HepG2 (cell line): ENCODE measurements at regions of chrX and their contacts with region 1.

Region 1: GRCh38 chrX:5928224-5928623 is 300.4 kb downstream of the NLGN4X start:
- DNase-seq: no peak
- ATAC-seq: no peak
- H3K4me3 ChIP-seq: no peak overlapping the region
- H3K27ac ChIP-seq: no peak overlapping the region
- H3K4me1 ChIP-seq: no peaks in the 10 kb centered on the region
- H3K27me3 ChIP-seq: no peaks in the 10 kb centered on the region
- CTCF ChIP-seq: no peak
- EP300 ChIP-seq: no peak
- POLR2A ChIP-seq: no peak
- RAD21 ChIP-seq: no peak

Region 2: DNA sequence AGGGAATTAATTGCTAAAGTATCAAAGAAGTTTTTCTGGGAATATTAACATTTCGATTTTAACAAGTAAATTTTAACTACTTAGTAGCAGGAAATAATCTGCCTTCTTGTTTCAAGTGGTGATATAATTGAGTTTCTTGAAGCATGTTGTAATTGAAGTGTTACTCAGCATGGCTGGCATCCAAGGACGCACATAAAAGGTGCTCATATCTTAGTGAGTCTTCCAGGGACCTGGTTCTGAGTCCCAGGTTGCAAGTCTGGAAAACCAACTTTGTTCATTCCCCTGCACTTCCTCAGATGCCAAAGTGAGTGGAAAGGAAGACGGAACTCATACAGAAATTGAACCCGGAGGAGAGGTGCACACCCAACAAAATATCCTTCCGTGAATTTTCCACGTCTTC is 99.2 kb before region 1 on chrX:
- CTCF ChIA-PET with region 1: no interaction called
- POLR2A ChIA-PET with region 1: no interaction called
- in situ Hi-C with region 1: no loop called
- intact Hi-C with region 1: no loop called
- DNase-seq: no peak
- ATAC-seq: no peak
- H3K4me3 ChIP-seq: no peak overlapping the region
- H3K27ac ChIP-seq: no peak overlapping the region
- H3K4me1 ChIP-seq: no peaks in the 10 kb centered on the region
- H3K27me3 ChIP-seq: no peaks in the 10 kb centered on the region
- CTCF ChIP-seq: no peak
- EP300 ChIP-seq: no peak
- POLR2A ChIP-seq: no peak
- RAD21 ChIP-seq: no peak

Region 3: GRCh38 chrX:5907207-5907606 is 21.0 kb before region 1 on chrX:
- CTCF ChIA-PET with region 1: no interaction called
- POLR2A ChIA-PET with region 1: no interaction called
- in situ Hi-C with region 1: no loop called
- intact Hi-C with region 1: no loop called
- DNase-seq: no peak
- ATAC-seq: no peak
- H3K4me3 ChIP-seq: no peak overlapping the region
- H3K27ac ChIP-seq: no peak overlapping the region
- H3K4me1 ChIP-seq: no peaks in the 10 kb centered on the region
- H3K27me3 ChIP-seq: no peaks in the 10 kb centered on the region
- CTCF ChIP-seq: no peak
- EP300 ChIP-seq: no peak
- POLR2A ChIP-seq: no peak
- RAD21 ChIP-seq: no peak

Region 4: DNA sequence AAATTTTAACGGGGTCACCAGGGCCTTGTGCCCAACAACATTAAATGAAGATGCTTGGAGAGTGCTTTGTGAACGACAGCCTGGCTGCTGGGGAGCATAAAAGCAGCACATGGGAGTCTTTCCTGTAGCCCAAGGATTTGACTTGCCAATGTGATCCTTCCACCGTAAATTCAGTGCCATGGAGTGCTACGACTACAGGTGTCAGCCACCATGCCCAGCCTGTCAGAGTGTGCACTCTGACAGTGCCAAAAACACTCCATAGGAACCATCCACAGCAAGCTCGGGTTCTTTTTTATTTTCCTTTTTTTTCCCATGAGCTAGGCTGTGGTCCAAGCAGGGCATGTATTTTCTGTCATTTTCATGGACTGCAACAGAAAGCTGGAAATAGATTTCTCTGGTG is 143.5 kb after region 1 on chrX:
- CTCF ChIA-PET with region 1: no interaction called
- POLR2A ChIA-PET with region 1: no interaction called
- in situ Hi-C with region 1: no loop called
- intact Hi-C with region 1: no loop called
- DNase-seq: no peak
- ATAC-seq: no peak
- H3K4me3 ChIP-seq: no peak overlapping the region
- H3K27ac ChIP-seq: no peak overlapping the region
- H3K4me1 ChIP-seq: no peaks in the 10 kb centered on the region
- H3K27me3 ChIP-seq: no peaks in the 10 kb centered on the region
- CTCF ChIP-seq: no peak
- EP300 ChIP-seq: no peak
- POLR2A ChIP-seq: no peak
- RAD21 ChIP-seq: no peak

Region 5: GRCh38 chrX:6517376-6517775 is 589.2 kb after region 1 on chrX:
- CTCF ChIA-PET with region 1: no interaction called
- POLR2A ChIA-PET with region 1: no interaction called
- in situ Hi-C with region 1: no loop called
- intact Hi-C with region 1: loop called (anchors 5 kb)
- DNase-seq: no peak
- ATAC-seq: no peak
- H3K4me3 ChIP-seq: no peak overlapping the region
- H3K27ac ChIP-seq: no peak overlapping the region
- H3K4me1 ChIP-seq: no peaks in the 10 kb centered on the region
- H3K27me3 ChIP-seq: no peaks in the 10 kb centered on the region
- CTCF ChIP-seq: no peak
- EP300 ChIP-seq: no peak
- POLR2A ChIP-seq: no peak
- RAD21 ChIP-seq: no peak